Activated CD4-positive, alpha-beta T cell treated with anti-CD3 and anti-CD28 coated beads, Interleukin-2, amount 10 ng/mL, durations not matched to agents 24 days and 14 days (primary cell): ENCODE measurements at regions of chr3 and their contacts with region 1.

Region 1: DNA sequence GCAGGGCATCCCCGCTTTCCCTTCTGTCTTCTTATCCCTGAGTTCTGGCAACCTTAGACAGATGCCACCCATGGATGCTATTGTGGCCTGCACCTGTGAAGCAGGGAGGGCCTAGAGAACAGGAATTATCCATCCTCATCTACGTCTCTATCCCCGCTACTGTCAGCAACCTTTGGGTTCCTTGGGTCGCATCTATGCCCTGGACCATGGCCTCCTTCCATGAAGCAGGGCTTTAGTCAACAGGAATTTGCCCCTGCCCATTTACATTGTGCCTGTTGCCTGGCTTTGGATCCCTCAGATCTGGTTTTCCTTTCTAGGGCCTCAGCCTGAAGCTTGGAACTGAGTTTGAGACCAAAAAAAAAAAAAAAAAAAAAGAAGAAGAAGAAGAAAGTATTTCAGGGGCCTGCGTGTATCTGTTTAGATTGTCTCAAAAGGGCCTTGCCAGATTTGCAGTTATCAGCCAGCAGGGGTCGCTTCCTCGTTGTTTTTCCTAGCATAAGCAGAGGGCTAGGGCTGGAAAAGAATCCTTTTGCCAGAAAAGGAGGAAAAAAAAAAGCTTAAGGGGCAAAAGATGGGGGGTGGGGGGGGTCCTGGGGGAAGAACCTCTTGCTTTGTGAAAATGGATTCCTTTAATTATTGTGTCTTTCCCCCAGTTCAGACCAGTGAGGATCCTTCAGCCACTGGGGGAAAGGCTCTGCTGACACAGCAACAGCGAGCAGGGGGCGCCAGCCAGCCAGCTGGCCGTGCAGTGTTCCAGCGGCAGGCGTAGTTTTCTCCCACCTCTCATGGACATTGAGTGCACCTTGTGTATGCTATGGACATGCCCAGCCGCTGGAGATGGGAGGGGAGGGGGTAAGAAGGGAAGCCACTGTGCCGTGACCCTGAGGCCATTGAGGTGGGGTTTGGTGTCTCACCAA is 65.7 kb upstream of the ALDH1L1 start:
- DNase-seq: peak; percentile 70
- H3K4me3 Mint-ChIP-seq: no peak overlapping the region
- H3K27ac Mint-ChIP-seq: no peak overlapping the region
- H3K4me1 Mint-ChIP-seq: no peaks in the 10 kb centered on the region
- H3K27me3 Mint-ChIP-seq: peaks cover 2% of the 10 kb centered on the region

Region 2: GRCh38 chr3:126197854-126198584 is 48.0 kb before region 1 on chr3:
- intact Hi-C with region 1: no loop called
- DNase-seq: peak; percentile 74
- H3K4me3 Mint-ChIP-seq: no peak overlapping the region
- H3K27ac Mint-ChIP-seq: no peak overlapping the region
- H3K4me1 Mint-ChIP-seq: no peaks in the 10 kb centered on the region
- H3K27me3 Mint-ChIP-seq: peaks cover 4% of the 10 kb centered on the region

Region 3: GRCh38 chr3:126389112-126389793 is 143.2 kb after region 1 on chr3:
- intact Hi-C with region 1: loop called (anchors 1 kb)
- DNase-seq: peak; percentile 78
- H3K4me3 Mint-ChIP-seq: peak overlapping the region; percentile 26
- H3K27ac Mint-ChIP-seq: no peak overlapping the region
- H3K4me1 Mint-ChIP-seq: peaks cover 6% of the 10 kb centered on the region
- H3K27me3 Mint-ChIP-seq: peaks cover 53% of the 10 kb centered on the region